Calu3 (cell line): ENCODE measurements at regions of chr5 and their contacts with region 1.

Region 1: DNA sequence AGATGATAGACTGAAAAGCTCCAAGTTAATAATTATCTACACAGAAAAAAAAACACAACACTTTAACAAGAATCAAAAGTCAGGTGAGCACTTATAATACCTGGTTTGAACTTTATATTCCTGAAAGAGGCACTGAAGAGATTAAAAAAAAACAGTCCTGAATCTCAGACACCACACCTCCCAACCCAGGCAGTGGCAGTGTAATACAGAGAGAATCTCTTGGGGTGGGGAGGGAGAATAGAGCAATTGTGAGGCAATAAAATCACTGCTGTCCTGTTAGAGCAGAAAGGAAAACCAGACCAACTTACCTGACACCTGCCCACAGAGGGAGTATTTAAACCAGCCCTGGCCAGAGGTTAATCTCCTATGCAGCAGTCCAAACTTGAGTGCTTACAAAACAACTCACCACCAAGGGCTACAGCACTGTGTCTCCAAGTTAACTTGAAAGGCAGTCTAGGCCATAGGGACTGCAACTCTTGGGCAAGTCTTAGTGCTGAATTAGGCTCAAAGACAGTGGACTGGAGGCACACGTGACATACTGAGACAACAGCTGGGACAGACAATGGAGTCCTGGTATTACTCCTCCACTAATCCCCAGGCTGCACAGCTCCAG is 54.2 kb downstream of the SLCO4C1 start:
- DNase-seq: no peak
- H3K4me3 Mint-ChIP-seq: no peak overlapping the region
- H3K27ac Mint-ChIP-seq: no peak overlapping the region
- H3K4me1 Mint-ChIP-seq: no peaks in the 10 kb centered on the region
- H3K27me3 Mint-ChIP-seq: no peaks in the 10 kb centered on the region
- CTCF ChIP-seq: no peak

Region 2: DNA sequence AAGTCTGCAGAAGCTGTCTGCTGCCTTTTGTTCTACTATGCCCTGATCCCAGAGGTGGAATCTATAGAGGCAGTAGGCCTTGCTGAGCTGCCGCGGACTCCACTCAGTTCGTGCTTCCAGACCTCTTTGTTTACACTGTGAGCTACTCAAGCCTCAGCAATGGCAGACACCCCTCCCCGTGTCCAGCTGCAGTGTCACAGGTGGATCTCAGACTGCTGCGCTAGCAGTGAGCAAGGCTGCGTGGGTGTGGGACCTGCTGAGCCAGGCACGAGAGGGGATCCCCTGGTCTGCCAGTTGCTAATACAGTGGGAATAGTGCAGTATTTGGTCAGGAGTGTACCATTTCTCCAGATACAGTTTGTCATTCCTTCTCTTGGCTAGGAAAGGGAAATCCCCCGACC is 45.4 kb before region 1 on chr5:
- CTCF ChIA-PET with region 1: no interaction called
- intact Hi-C with region 1: no loop called
- DNase-seq: no peak
- H3K4me3 Mint-ChIP-seq: no peak overlapping the region
- H3K27ac Mint-ChIP-seq: no peak overlapping the region
- H3K4me1 Mint-ChIP-seq: no peaks in the 10 kb centered on the region
- H3K27me3 Mint-ChIP-seq: no peaks in the 10 kb centered on the region
- CTCF ChIP-seq: no peak

Region 3: DNA sequence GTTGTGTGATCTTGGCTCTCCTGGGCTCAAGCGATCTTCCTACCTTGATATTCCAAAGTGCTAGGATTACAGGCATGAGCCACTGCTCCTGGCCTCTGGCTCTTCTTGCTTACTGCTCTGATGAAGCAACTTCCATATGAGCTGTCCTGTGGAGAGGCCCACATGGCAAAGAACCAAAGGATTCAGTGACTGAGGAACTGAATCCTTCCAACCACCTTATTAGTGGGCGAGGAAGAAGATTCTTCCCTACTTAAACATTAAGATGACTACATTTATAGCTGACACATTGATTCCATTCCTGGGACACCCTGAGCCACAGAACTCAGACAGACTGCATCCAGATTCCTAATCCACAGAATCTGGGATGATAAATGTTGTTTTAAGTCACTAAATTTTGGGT is 70.7 kb after region 1 on chr5:
- CTCF ChIA-PET with region 1: interaction called, 10 read pairs
- intact Hi-C with region 1: no loop called
- DNase-seq: no peak
- H3K4me3 Mint-ChIP-seq: no peak overlapping the region
- H3K27ac Mint-ChIP-seq: no peak overlapping the region
- H3K4me1 Mint-ChIP-seq: no peaks in the 10 kb centered on the region
- H3K27me3 Mint-ChIP-seq: no peaks in the 10 kb centered on the region
- CTCF ChIP-seq: no peak

Region 4: GRCh38 chr5:102561894-102562760 is 320.2 kb after region 1 on chr5:
- CTCF ChIA-PET with region 1: no interaction called
- intact Hi-C with region 1: no loop called
- DNase-seq: peak; percentile 57
- H3K4me3 Mint-ChIP-seq: no peak overlapping the region
- H3K27ac Mint-ChIP-seq: no peak overlapping the region
- H3K4me1 Mint-ChIP-seq: peaks cover 9% of the 10 kb centered on the region
- H3K27me3 Mint-ChIP-seq: no peaks in the 10 kb centered on the region
- CTCF ChIP-seq: peak; percentile 74